ENCODE measurements at regions of chr17 and their contacts with region 1.

Region 1: DNA sequence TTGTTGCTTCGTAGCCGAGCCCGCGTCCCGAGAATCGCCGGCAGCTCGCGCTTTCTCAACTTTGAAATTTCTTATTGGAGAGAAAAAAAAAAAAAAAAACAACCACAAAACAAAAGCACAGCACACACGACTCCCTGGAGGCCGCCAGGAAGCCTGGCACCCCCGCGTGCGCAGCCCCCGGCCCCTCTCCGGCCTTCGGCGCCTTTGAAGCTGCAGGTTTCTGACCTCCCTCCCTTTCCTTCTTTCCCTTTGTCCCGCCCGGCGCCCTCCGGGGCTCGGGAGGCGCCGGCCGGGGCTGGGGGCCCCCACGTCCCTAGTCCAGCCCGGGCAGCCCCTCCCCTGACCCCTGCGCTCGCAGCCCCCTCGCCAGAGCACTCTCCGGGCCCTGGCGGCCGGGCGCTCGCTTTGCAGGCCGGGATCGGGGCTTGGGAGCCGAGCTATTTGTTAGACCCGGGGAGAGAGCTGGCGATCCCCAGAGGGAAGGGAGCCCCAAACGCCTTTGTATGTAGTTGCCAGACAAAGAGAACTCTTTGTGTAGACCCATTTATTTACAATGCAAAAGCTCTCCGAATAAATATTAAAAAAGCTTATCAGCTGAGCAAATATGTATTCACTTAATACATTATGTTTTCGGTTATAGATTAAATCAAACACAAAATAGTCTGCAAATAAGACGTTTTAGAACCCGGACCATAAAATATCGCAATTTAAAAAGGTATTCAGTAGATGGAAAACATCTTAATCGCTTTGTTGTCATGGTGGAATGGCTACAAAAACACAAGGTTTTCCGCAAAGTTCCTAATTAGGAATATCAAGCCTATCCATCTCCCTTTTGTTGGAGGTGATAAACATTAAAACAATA is 2.3 kb downstream of the BAHCC1 start:
- DNase-seq: no peak
- H3K27ac ChIP-seq: peak overlapping the region; percentile 94
- CTCF ChIP-seq: peak; percentile 32; the same call in 1 of the 2 replicates

Region 2: GRCh38 chr17:81322271-81323082 is 75.1 kb before region 1 on chr17:
- CTCF ChIA-PET with region 1: interaction called, 10 read pairs
- POLR2A ChIA-PET with region 1: no interaction called
- DNase-seq: no peak
- H3K27ac ChIP-seq: peak overlapping the region; percentile 99
- CTCF ChIP-seq: peak; percentile 55

Measured in RWPE1 (cell line).